Aorta (tissue), 5 donors: ENCODE measurements at regions of chr6 and their contacts with region 1.

Region 1: DNA sequence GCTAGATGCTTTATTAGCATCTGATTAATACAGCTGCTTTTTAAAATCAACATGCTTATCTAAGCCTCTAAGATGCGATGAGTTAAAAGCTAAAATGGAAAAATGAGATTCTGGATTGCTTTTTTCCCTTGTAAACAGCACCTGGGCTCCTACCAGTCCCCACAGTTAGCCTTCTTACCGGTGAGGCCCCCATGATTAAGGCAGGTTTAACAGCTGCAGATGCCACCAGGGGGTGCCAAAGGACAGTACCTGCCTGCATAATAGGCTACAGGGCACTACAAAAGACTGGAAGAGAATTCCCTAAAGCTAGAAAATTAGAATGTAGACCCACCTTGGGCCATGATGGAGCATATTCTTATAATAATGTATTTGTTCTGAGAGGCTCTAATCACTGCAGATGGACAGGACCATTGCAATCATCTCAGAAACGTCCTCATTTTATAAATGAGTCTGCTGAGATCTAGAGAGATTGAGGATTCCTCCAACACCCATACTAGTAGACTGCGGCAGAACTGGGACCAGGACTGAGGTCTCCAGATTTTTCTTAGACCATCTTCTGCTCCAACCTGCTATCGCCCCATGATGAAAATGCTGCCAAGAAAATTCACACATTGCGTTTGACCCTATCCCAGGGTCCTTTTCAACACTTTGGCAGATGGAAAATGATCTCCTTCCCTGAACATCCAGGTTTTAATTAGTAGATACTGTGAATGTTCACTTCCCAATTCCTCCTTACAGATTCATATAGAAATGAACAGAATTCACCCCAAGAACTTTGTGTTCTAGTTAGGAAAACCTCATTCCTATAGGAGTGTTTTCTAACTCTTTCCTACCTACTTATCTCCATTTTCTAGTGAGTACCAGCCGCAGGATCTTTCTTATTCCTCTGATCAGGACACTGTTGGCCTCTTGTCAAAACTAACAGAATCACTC is 148.8 kb downstream of the RPS12 start:
- DNase-seq: peak; percentile 69 to 84
- ATAC-seq: peak; percentile 59
- H3K4me3 ChIP-seq: no peak overlapping the region
- H3K27ac ChIP-seq: no peak overlapping the region
- H3K4me1 ChIP-seq: peaks cover 0 to 2% of the 10 kb centered on the region in 2 donors
- H3K27me3 ChIP-seq: no peaks in the 10 kb centered on the region

Region 2: DNA sequence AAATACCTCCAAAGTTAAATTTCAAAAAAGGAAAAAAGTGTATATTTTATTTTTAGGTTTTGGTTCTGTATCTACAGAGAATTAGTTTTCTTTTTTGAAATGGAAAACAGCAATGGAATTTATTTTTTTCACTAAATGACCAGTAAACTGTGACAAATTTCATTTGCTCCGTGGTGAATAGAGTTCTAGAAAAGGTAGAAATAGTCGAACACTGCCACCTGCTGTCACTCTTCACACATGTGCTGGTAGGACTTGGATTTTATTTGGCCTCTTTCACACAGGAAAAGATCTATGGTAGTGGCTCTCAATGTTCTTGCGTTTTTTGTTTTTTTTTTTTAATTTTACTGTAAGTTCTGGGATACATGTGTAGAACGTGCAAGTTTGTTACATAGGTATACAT is 590.5 kb after region 1 on chr6:
- intact Hi-C with region 1: loop called (anchors 10 kb)
- DNase-seq: no peak
- ATAC-seq: no peak
- H3K4me3 ChIP-seq: no peak overlapping the region
- H3K27ac ChIP-seq: no peak overlapping the region
- H3K4me1 ChIP-seq: peaks cover 2 to 3% of the 10 kb centered on the region in 2 donors
- H3K27me3 ChIP-seq: no peaks in the 10 kb centered on the region